ENCODE measurements at regions of chr3 and their contacts with region 1.

Region 1: DNA sequence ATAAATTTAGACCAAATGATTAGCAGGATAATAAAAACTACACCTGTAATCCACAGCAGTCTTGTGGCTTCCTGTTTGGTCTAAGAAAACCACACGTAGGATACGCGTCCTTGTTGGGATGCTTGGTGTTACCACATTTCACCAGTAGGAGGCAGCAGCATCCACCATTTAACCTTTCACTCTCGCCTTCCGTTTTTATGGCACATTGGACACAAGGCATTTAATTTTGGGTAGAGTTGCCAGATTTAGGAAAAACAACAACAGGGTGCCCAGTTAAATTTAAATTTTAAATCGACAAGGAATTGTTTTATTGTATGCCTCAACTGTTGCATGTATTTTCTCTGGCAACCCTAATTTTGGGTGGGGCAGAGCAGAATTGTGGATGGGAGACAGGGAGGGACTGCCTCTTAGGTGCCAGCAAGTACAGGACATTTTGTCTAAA is 6.3 kb downstream of the LRRC31 start:
- DNase-seq: peak; percentile 87
- H3K4me3 ChIP-seq: no peak overlapping the region
- H3K27ac ChIP-seq: no peak overlapping the region
- H3K4me1 ChIP-seq: peaks cover 4% of the 10 kb centered on the region
- H3K27me3 ChIP-seq: no peaks in the 10 kb centered on the region
- CTCF ChIP-seq: peak; percentile 87

Region 2: GRCh38 chr3:168096210-168096793 is 1767.2 kb before region 1 on chr3:
- intact Hi-C with region 1: no loop called
- DNase-seq: peak; percentile 76
- H3K4me3 ChIP-seq: peak overlapping the region; percentile 69
- H3K27ac ChIP-seq: peak overlapping the region; percentile 91
- H3K4me1 ChIP-seq: no peaks in the 10 kb centered on the region
- H3K27me3 ChIP-seq: no peaks in the 10 kb centered on the region
- CTCF ChIP-seq: no peak

Region 3: GRCh38 chr3:169964176-169964575 is 100.7 kb after region 1 on chr3:
- intact Hi-C with region 1: loop called (anchors 5 kb)
- DNase-seq: no peak
- H3K4me3 ChIP-seq: no peak overlapping the region
- H3K27ac ChIP-seq: no peak overlapping the region
- H3K4me1 ChIP-seq: no peaks in the 10 kb centered on the region
- H3K27me3 ChIP-seq: no peaks in the 10 kb centered on the region
- CTCF ChIP-seq: no peak

Region 4: GRCh38 chr3:170037463-170038433 is 174.3 kb after region 1 on chr3 and contains the start of gene GPR160:
- intact Hi-C with region 1: loop called (anchors 5 kb)
- DNase-seq: peak; percentile 94
- H3K4me3 ChIP-seq: peak within 1 kb of the TSS; percentile 80
- H3K27ac ChIP-seq: peak within 1 kb of the TSS; percentile 89
- H3K4me1 ChIP-seq: no peaks in the 10 kb centered on the region
- H3K27me3 ChIP-seq: no peaks in the 10 kb centered on the region
- CTCF ChIP-seq: peak; percentile 57
- total RNA-seq, gene GPR160: 56.4 to 78.4 TPM